HCT116 (cell line): ENCODE measurements at regions of chr11 and their contacts with region 1.

Region 1: DNA sequence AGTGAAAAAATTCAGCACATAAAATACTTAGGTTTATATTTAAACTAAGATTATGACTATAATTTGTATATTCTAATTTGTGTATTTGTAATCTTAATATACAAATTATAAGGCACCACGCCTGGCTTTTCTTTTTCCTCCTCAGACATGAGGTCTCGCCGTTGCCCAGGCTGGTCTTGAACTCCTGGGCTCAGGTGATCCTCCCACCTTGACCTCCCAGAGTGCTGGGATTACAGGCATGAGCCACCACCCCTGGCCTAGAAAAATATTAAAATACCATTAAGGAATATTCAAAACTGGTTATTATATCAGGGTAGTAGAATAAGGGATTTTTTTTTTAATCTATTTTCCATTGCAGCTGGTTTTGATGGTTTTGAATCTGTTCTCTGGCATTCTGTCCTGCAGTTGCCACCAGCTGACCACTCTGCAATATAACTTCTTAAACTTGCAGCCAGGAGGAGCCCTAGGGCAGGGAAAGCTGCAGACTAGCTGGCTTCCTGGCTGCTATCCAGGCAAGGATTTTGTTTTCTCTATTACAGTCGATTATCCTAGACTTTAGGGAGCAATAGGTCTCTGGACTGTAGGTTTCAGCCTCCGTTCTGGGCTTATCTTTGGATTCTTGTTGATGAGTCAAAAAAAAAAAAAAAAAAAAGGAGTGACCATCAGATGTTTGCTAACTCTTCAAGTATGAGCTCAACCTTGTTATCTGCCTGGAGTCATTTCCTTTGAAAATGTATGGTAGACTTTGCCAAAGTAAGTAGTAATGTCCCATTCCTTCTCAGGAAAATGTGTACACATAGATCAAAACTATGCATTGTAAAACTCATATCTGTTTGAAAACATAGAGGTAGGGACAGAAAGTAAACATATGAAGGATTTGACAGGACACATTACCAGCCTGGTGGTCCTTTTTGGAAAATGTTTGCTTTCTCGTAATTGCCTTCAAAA is 13.2 kb downstream of the POLA2 start:
- DNase-seq: peak; percentile 68
- ATAC-seq: peak; percentile 71
- H3K4me3 ChIP-seq: no peak overlapping the region
- H3K27ac ChIP-seq: no peak overlapping the region
- H3K4me1 ChIP-seq: peaks cover 20 to 38% of the 10 kb centered on the region in 2 experiments
- H3K27me3 ChIP-seq: no peaks in the 10 kb centered on the region
- CTCF ChIP-seq: peak; percentile 67 to 97 (median 82); a peak in 5 of 6 replicates
- POLR2A ChIP-seq: no peak
- RAD21 ChIP-seq: peak; percentile 99

Region 2: GRCh38 chr11:65261591-65262380 is 13.2 kb before region 1 on chr11 and contains the start of gene POLA2:
- CTCF ChIA-PET with region 1: interaction called, 26 read pairs
- POLR2A ChIA-PET with region 1: interaction called, 5 read pairs
- RAD21 ChIA-PET with region 1: interaction called in 1 of 2 experiments, 3 read pairs
- intact Hi-C with region 1: no loop called
- DNase-seq: peak; percentile 92
- ATAC-seq: peak; percentile 87
- H3K4me3 ChIP-seq: peak within 1 kb of the TSS; percentile 81 to 90
- H3K27ac ChIP-seq: peak within 1 kb of the TSS; percentile 90
- H3K4me1 ChIP-seq: peaks cover 7 to 18% of the 10 kb centered on the region in 2 experiments; a peak in 3 of 4 replicates
- H3K27me3 ChIP-seq: no peaks in the 10 kb centered on the region
- CTCF ChIP-seq: no peak
- POLR2A ChIP-seq: peak; percentile 62
- RAD21 ChIP-seq: no peak
- total RNA-seq, gene POLA2: 20.0 TPM

Region 3: GRCh38 chr11:65314501-65315203 is 39.6 kb after region 1 on chr11 and contains the start of gene CDC42EP2:
- CTCF ChIA-PET with region 1: interaction called, 127 read pairs
- POLR2A ChIA-PET with region 1: interaction called, 20 read pairs
- RAD21 ChIA-PET with region 1: interaction called, 12 to 27 read pairs
- intact Hi-C with region 1: loop called (anchors 1 kb)
- DNase-seq: peak; percentile 44
- ATAC-seq: peak; percentile 82
- H3K4me3 ChIP-seq: peak within 1 kb of the TSS; percentile 84 to 85
- H3K27ac ChIP-seq: peak within 1 kb of the TSS; percentile 83
- H3K4me1 ChIP-seq: peaks cover 31 to 61% of the 10 kb centered on the region in 2 experiments
- H3K27me3 ChIP-seq: no peaks in the 10 kb centered on the region
- CTCF ChIP-seq: no peak
- POLR2A ChIP-seq: peak; percentile 62
- RAD21 ChIP-seq: no peak
- total RNA-seq, gene CDC42EP2: 15.4 TPM

Region 4: DNA sequence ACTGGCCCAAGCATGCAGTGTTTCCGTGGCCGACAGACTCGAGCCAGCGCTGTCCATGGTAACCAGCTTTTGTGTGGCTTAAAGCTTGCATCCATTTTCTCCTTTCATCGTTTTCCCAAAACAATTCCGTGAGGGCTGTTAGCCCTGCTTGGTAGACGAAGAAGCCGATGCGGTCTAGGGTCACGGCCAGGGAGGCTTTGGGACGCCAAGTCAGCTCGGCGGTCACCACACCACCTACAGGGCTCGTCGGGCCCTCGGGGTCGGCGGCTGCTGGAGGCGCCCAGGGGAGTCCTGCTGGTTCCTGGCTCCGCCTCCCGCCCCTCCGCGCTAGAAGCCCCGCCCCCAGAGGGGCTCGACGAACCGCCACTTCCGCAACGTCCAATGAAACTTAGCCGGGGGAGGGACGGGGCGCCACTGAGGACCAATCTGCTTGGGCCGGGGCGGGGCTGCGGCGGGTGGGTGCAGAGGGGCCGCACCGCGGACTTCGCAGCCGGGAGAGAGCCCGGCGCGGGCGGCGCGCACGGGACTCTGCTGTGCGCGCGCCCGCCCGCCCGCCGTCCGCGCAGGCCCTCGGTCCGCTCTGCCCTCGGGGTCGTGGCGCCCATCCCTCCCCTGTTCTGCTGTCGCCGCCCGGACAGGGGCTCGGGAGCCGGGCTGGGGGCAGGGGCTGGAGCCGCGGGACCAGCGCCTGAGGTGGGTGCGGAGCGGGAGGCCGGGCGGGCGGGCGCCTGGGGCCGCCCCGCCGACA is 79.4 kb after region 1 on chr11 and contains the start of gene TIGD3:
- CTCF ChIA-PET with region 1: interaction called, 49 read pairs
- POLR2A ChIA-PET with region 1: interaction called, 3 read pairs
- RAD21 ChIA-PET with region 1: no interaction called
- intact Hi-C with region 1: no loop called
- DNase-seq: peak; percentile 81
- ATAC-seq: peak; percentile 96
- H3K4me3 ChIP-seq: peak within 1 kb of the TSS; percentile 44 to 60
- H3K27ac ChIP-seq: peak within 1 kb of the TSS; percentile 63
- H3K4me1 ChIP-seq: peaks cover 3 to 20% of the 10 kb centered on the region in 2 experiments; a peak in 2 of 4 replicates
- H3K27me3 ChIP-seq: no peaks in the 10 kb centered on the region
- CTCF ChIP-seq: no peak
- POLR2A ChIP-seq: peak; percentile 69
- RAD21 ChIP-seq: no peak
- total RNA-seq, gene TIGD3: 2.4 TPM